ENCODE measurements at regions of chr7 and their contacts with region 1.

Region 1: GRCh38 chr7:123154231-123154860 is 45.4 kb downstream of the SLC13A1 start:
- DNase-seq: peak; percentile 66
- H3K4me3 Mint-ChIP-seq: no peak overlapping the region
- H3K27ac Mint-ChIP-seq: no peak overlapping the region
- H3K4me1 Mint-ChIP-seq: no peaks in the 10 kb centered on the region
- H3K27me3 Mint-ChIP-seq: no peaks in the 10 kb centered on the region

Region 2: GRCh38 chr7:122092964-122093797 is 1061.2 kb before region 1 on chr7:
- CTCF ChIA-PET with region 1: no interaction called
- intact Hi-C with region 1: loop called (anchors 5 kb)
- DNase-seq: peak; percentile 74
- H3K4me3 Mint-ChIP-seq: no peak overlapping the region
- H3K27ac Mint-ChIP-seq: no peak overlapping the region
- H3K4me1 Mint-ChIP-seq: no peaks in the 10 kb centered on the region
- H3K27me3 Mint-ChIP-seq: no peaks in the 10 kb centered on the region

Region 3: DNA sequence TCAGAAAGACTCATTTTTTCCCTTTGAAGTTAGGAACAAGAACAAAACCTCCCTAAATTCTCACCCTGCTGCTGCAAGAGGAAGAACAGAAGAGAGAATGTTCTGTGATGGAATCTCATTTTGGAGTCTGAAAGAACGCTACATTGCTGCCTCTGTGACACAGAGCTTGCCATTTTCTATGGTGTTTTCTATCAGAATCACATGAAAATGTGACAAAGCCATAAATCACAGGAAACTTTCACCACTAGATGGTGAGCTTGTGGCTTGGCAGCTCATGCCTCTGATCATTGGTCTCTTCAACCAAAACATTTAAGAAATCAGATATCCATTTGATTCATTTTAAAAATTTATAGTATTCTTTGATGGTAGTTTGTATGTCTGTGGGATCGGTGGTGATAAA is 351.0 kb before region 1 on chr7:
- CTCF ChIA-PET with region 1: no interaction called
- intact Hi-C with region 1: loop called (anchors 2 kb)
- DNase-seq: no peak
- H3K4me3 Mint-ChIP-seq: no peak overlapping the region
- H3K27ac Mint-ChIP-seq: no peak overlapping the region
- H3K4me1 Mint-ChIP-seq: no peaks in the 10 kb centered on the region
- H3K27me3 Mint-ChIP-seq: no peaks in the 10 kb centered on the region

Region 4: DNA sequence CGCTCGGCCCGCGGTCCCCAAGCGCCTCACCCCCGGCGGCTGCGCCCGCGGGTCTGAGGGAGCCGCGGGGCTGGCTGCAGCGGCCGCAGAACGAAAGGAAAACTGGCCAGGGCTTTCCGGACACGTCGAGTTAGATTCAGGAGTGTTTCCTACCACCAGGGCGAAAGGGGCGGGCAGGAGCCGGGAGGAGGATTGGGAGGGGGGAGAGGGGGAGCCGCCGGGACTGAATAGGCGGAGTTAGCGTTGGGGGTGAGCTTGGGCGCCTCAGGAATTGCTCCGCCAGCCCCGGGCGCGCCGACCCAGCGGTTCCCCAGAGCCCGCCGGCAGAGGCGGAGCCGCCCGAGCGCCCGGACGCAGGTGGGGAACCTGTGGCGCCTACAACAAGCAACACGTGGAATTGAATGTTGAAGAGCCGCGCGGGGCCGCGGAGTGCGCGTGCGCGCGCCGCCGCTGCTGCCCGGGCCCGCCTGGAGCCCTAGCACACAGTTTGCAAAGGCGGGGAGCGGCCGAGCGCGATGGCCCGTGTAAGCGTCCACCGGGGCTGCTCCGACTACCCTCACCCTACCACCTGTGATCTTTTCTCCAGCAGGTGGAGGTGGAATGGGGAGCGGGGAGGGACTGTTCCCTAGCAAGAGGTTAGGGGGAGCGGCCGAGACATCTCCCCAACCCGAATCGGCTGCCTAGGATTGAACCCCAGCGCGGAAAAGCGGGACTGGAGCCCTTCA is 267.8 kb before region 1 on chr7 and contains the start of gene CADPS2:
- CTCF ChIA-PET with region 1: no interaction called
- intact Hi-C with region 1: loop called (anchors 1 kb)
- DNase-seq: peak; percentile 9
- H3K4me3 Mint-ChIP-seq: peak within 1 kb of the TSS; percentile 30
- H3K27ac Mint-ChIP-seq: no peak within 1 kb of the TSS
- H3K4me1 Mint-ChIP-seq: peaks cover 9% of the 10 kb centered on the region
- H3K27me3 Mint-ChIP-seq: peaks cover 59% of the 10 kb centered on the region
- total RNA-seq, gene CADPS2: not detected

Region 5: DNA sequence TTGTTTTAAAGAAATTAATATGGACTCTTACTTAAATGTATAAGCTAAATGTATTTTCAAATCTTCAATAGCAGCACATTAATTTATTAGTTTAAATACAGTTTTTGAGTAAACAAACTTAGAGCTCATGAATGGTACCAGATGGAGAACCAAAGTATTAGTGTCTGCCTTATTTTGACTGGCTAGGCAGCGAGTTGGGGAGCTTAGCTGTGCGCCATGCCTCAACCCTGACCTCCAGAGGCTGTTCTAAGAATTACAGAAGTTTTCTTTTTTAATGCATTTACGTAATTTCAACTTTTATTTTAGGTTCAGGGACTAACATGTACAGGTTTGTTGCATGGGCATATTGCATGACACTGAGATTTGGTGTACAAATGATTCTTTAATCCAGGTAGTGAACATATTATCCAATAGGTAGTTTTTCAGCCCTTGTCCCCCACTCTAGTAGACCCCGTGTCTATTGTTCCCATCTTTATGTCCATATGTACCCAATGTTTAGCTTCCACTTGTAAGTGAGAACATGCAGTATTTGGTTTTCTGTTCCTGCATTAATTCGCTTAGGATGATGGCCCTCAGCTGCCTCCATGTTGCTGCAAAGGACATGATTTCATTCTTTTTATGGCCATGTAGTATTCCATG is 213.3 kb after region 1 on chr7:
- CTCF ChIA-PET with region 1: interaction called, 3 read pairs
- intact Hi-C with region 1: loop called (anchors 10 kb)
- DNase-seq: peak; percentile 9
- H3K4me3 Mint-ChIP-seq: no peak overlapping the region
- H3K27ac Mint-ChIP-seq: no peak overlapping the region
- H3K4me1 Mint-ChIP-seq: no peaks in the 10 kb centered on the region
- H3K27me3 Mint-ChIP-seq: no peaks in the 10 kb centered on the region